ENCODE measurements at regions of chr1 and their contacts with region 1.

Region 1: GRCh38 chr1:202810615-202811295 is at the start of gene PCAT6:
- DNase-seq: peak; percentile 97
- H3K4me3 Mint-ChIP-seq: peak within 1 kb of the TSS; percentile 85
- H3K27ac Mint-ChIP-seq: peak within 1 kb of the TSS; percentile 79
- H3K4me1 Mint-ChIP-seq: peaks cover 31% of the 10 kb centered on the region
- H3K27me3 Mint-ChIP-seq: peaks cover 22% of the 10 kb centered on the region
- total RNA-seq, gene PCAT6: 0.83 and 1.4 TPM in 2 replicates

Region 2: DNA sequence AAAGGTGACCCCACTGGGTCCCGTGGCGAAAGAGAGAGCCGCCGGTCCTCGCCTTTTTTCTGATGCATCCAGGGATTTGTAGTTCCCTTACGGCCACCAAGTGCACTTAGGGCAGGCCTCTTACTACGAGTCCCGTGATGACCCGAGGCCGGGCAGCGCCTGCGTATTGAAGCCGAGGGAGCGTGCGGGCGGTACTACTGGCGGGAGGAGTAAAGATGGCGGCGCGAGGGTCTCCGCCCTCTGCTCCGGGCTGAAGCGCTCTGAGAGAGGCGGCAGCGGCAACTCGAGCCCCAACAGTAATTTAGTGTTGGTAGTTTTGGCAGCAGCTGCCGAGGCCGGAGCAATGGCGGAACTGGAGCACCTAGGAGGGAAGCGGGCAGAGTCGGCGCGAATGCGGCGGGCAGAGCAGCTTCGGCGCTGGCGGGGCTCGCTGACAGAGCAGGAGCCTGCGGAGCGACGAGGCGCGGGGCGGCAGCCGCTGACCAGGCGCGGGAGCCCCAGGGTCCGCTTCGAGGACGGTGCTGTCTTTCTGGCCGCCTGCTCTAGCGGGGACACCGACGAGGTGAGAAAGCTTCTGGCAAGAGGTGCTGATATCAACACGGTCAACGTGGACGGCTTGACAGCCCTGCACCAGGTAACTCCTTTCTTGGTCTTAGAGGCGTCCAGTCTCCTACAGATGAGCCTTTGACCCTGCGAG is 462.1 kb before region 1 on chr1 and contains the start of gene PPP1R12B:
- intact Hi-C with region 1: loop called (anchors 5 kb)
- DNase-seq: peak; percentile 99
- H3K4me3 Mint-ChIP-seq: peak within 1 kb of the TSS; percentile 83
- H3K27ac Mint-ChIP-seq: peak within 1 kb of the TSS; percentile 93
- H3K4me1 Mint-ChIP-seq: peaks cover 26% of the 10 kb centered on the region
- H3K27me3 Mint-ChIP-seq: no peaks in the 10 kb centered on the region
- total RNA-seq, gene PPP1R12B: 14.2 and 14.8 TPM in 2 replicates

Region 3: GRCh38 chr1:202835548-202836090 is 24.9 kb after region 1 on chr1:
- intact Hi-C with region 1: loop called (anchors 2 kb)
- DNase-seq: peak; percentile 86
- H3K4me3 Mint-ChIP-seq: peak overlapping the region; percentile 76
- H3K27ac Mint-ChIP-seq: peak overlapping the region; percentile 81
- H3K4me1 Mint-ChIP-seq: peaks cover 47% of the 10 kb centered on the region
- H3K27me3 Mint-ChIP-seq: no peaks in the 10 kb centered on the region

Region 4: GRCh38 chr1:202888531-202889360 is 78.0 kb after region 1 on chr1 and contains the start of gene RABIF:
- intact Hi-C with region 1: loop called (anchors 1 kb)
- DNase-seq: peak; percentile 99
- H3K4me3 Mint-ChIP-seq: peak within 1 kb of the TSS; percentile 93
- H3K27ac Mint-ChIP-seq: peak within 1 kb of the TSS; percentile 98
- H3K4me1 Mint-ChIP-seq: peaks cover 20% of the 10 kb centered on the region
- H3K27me3 Mint-ChIP-seq: peaks cover 2% of the 10 kb centered on the region
- total RNA-seq, gene RABIF: 11.8 and 12.7 TPM in 2 replicates

Region 5: GRCh38 chr1:203006948-203007871 is 196.5 kb after region 1 on chr1 and contains the start of gene TMEM183A:
- intact Hi-C with region 1: loop called (anchors 1 kb)
- DNase-seq: peak; percentile 98
- H3K4me3 Mint-ChIP-seq: peak within 1 kb of the TSS; percentile 86
- H3K27ac Mint-ChIP-seq: peak within 1 kb of the TSS; percentile 97
- H3K4me1 Mint-ChIP-seq: peaks cover 22% of the 10 kb centered on the region
- H3K27me3 Mint-ChIP-seq: no peaks in the 10 kb centered on the region
- total RNA-seq, gene TMEM183A: 77.7 and 82.8 TPM in 2 replicates